ENCODE measurements at regions of chr7 and their contacts with region 1.

Region 1: GRCh38 chr7:8436965-8437364 is 3.6 kb downstream of the NXPH1 start:
- ATAC-seq: peak in 5 of 8 experiments; percentile 15 to 72 (median 29)
- H3K4me3 ChIP-seq: peak overlapping the region in 2 of 5 donors; percentile 10 to 47
- H3K27ac ChIP-seq: no peak overlapping the region
- H3K4me1 ChIP-seq: peaks cover 8 to 12% of the 10 kb centered on the region in 2 donors

Region 2: GRCh38 chr7:10122551-10123100 is 1685.7 kb after region 1 on chr7:
- in situ Hi-C with region 1: loop called in 1 of 9 experiments (anchors 25 kb)
- ATAC-seq: peak in 7 of 8 experiments; percentile 27 to 100 (median 99)
- H3K4me3 ChIP-seq: peak overlapping the region in 2 of 5 donors; percentile 4 to 13
- H3K27ac ChIP-seq: peak overlapping the region; percentile 74 to 81
- H3K4me1 ChIP-seq: peaks cover 30% of the 10 kb centered on the region in 2 donors

Region 3: DNA sequence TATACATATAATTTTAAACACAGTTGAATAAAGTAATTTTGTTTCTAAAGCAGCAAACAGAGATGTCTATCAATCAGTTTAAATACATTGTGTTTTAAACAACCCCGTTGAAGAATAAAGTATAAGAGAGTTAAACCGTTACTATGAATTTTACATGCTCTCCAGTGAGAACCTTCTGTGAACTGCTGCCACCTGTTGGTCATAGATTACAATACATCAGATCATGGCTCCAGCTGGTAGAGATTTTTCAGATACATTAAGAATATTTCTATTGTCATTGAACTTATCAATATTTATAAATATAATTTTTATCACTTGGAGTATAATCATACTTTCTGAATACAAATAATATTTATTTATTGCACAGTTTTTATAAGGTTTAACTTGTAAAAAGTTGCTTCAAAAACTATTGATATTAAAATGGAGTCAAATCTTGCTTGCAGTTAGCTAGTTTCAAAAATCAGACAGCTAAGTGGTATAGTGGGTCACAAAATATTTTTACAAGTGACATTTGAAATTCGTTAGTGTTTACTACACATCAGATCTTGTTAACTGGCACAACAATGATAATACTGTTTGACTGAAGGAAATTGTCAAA is 1975.6 kb after region 1 on chr7:
- in situ Hi-C with region 1: loop called in 1 of 9 experiments (anchors 25 kb)
- ATAC-seq: peak in 4 of 8 experiments; percentile 26 to 71 (median 40)
- H3K4me3 ChIP-seq: no peak overlapping the region
- H3K27ac ChIP-seq: no peak overlapping the region
- H3K4me1 ChIP-seq: no peaks in the 10 kb centered on the region